ENCODE measurements at regions of chr6 and their contacts with region 1.

Region 1: GRCh38 chr6:6890400-6890858 is 217.3 kb upstream of the RREB1 start:
- DNase-seq: peak in 2 of 3 donors; percentile 45 to 66
- H3K4me3 ChIP-seq: peak overlapping the region in 1 of 3 experiments; percentile 57
- H3K4me3 Mint-ChIP-seq: peak overlapping the region; percentile 56 to 81
- H3K27ac ChIP-seq: peak overlapping the region; percentile 65 to 81
- H3K27ac Mint-ChIP-seq: peak overlapping the region; percentile 85 to 97 (median 92)
- H3K4me1 ChIP-seq: peaks cover 66 to 78% of the 10 kb centered on the region in 2 donors
- H3K4me1 Mint-ChIP-seq: peaks cover 69% of the 10 kb centered on the region
- H3K27me3 ChIP-seq: no peaks in the 10 kb centered on the region
- H3K27me3 Mint-ChIP-seq: peaks cover 0 to 1% (median 0%) of the 10 kb centered on the region in 3 donors
- CTCF ChIP-seq: no peak

Region 2: GRCh38 chr6:6856538-6857523 is 33.6 kb before region 1 on chr6:
- intact Hi-C with region 1: loop called in 1 of 2 experiments (anchors 5 kb)
- DNase-seq: peak; percentile 75 to 92 (median 86)
- H3K4me3 ChIP-seq: peak overlapping the region in 2 of 3 experiments; percentile 8 to 58
- H3K4me3 Mint-ChIP-seq: peak overlapping the region; percentile 40 to 72
- H3K27ac ChIP-seq: peak overlapping the region; percentile 67 to 93
- H3K27ac Mint-ChIP-seq: peak overlapping the region; percentile 93 to 98 (median 97)
- H3K4me1 ChIP-seq: peaks cover 42 to 45% of the 10 kb centered on the region in 2 donors
- H3K4me1 Mint-ChIP-seq: peaks cover 59% of the 10 kb centered on the region
- H3K27me3 ChIP-seq: no peaks in the 10 kb centered on the region
- H3K27me3 Mint-ChIP-seq: peaks cover 1 to 2% (median 2%) of the 10 kb centered on the region in 3 donors
- CTCF ChIP-seq: no peak

Region 3: GRCh38 chr6:6927521-6928371 is 37.3 kb after region 1 on chr6:
- intact Hi-C with region 1: loop called in 1 of 2 experiments (anchors 5 kb)
- DNase-seq: peak; percentile 47 to 60 (median 57)
- H3K4me3 ChIP-seq: peak overlapping the region; percentile 0 to 72 (median 34)
- H3K4me3 Mint-ChIP-seq: peak overlapping the region; percentile 80 to 93
- H3K27ac ChIP-seq: peak overlapping the region; percentile 62 to 65
- H3K27ac Mint-ChIP-seq: peak overlapping the region; percentile 76 to 95 (median 90)
- H3K4me1 ChIP-seq: peaks cover 31 to 42% of the 10 kb centered on the region in 2 donors
- H3K4me1 Mint-ChIP-seq: peaks cover 48% of the 10 kb centered on the region
- H3K27me3 ChIP-seq: no peaks in the 10 kb centered on the region
- H3K27me3 Mint-ChIP-seq: peaks cover 0 to 3% (median 0%) of the 10 kb centered on the region in 3 donors
- CTCF ChIP-seq: peak; percentile 62